ENCODE measurements at regions of chr19 and their contacts with region 1.

Region 1: GRCh38 chr19:33302175-33302973 is at the start of gene CEBPA:
- DNase-seq: peak; percentile 85 to 91 (median 88)
- H3K4me3 ChIP-seq: peak within 1 kb of the TSS; percentile 82 to 99 (median 90)
- H3K4me3 Mint-ChIP-seq: peak within 1 kb of the TSS; percentile 89 to 95
- H3K27ac ChIP-seq: peak within 1 kb of the TSS; percentile 73 to 84
- H3K27ac Mint-ChIP-seq: peak within 1 kb of the TSS; percentile 28 to 97 (median 81)
- H3K4me1 ChIP-seq: peaks cover 42 to 49% of the 10 kb centered on the region in 2 donors
- H3K4me1 Mint-ChIP-seq: peaks cover 63% of the 10 kb centered on the region
- H3K27me3 ChIP-seq: no peaks in the 10 kb centered on the region
- H3K27me3 Mint-ChIP-seq: peaks cover 0 to 2% (median 1%) of the 10 kb centered on the region in 3 donors
- CTCF ChIP-seq: peak; percentile 62
- polyA plus RNA-seq, gene CEBPA: 17.9 to 76.3 (median 47.5) TPM

Region 2: DNA sequence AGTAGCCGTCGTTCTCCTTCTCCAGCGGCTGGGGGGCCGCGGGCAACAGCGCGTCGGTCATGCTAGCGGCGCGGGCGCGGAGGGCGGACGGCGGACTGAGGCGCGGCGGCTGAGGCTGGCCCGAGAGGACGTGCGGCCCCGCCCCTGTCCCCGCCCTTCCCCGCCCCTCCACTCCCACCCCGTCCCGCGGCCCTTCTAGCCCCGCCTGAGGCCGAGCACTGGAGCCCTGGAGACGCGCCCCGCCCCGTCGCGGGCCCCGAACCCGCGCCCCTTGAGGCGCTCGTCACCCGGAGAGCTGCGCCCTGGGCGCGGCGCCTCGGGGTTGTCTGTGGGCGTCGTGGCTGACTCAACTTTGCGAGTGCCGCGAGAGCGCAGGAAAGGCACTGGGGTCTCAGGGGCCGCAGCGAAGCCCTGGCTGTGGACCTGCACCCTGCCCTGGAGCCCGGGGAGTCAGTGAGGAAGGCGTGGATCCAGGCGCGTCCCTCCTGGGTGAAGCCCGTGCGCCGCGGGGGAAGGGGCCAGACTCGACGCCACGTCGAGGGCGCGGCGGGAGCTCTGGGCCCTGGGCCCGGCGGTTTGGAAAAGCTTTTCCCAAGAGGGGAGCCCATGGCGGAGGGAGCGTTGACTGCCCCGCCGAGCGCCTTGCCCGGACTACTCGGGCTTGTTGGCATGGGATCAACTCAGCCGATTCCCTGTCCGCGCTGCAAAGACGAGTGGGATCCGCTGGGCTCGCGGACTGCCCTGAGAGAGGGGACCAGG is 237.4 kb before region 1 on chr19 and contains the start of gene RHPN2:
- intact Hi-C with region 1: no loop called
- DNase-seq: peak in 1 of 3 donors; percentile 3
- H3K4me3 ChIP-seq: no peak within 1 kb of the TSS
- H3K4me3 Mint-ChIP-seq: peak within 1 kb of the TSS; percentile 62 to 83
- H3K27ac ChIP-seq: no peak within 1 kb of the TSS
- H3K27ac Mint-ChIP-seq: no peak within 1 kb of the TSS
- H3K4me1 ChIP-seq: peaks cover 0 to 3% of the 10 kb centered on the region in 2 donors
- H3K4me1 Mint-ChIP-seq: peaks cover 4% of the 10 kb centered on the region
- H3K27me3 ChIP-seq: peaks cover 14 to 34% of the 10 kb centered on the region in 2 donors
- H3K27me3 Mint-ChIP-seq: peaks cover 33 to 72% (median 61%) of the 10 kb centered on the region in 3 donors
- CTCF ChIP-seq: no peak
- polyA plus RNA-seq, gene RHPN2: 0.16 to 0.93 (median 0.51) TPM

Region 3: DNA sequence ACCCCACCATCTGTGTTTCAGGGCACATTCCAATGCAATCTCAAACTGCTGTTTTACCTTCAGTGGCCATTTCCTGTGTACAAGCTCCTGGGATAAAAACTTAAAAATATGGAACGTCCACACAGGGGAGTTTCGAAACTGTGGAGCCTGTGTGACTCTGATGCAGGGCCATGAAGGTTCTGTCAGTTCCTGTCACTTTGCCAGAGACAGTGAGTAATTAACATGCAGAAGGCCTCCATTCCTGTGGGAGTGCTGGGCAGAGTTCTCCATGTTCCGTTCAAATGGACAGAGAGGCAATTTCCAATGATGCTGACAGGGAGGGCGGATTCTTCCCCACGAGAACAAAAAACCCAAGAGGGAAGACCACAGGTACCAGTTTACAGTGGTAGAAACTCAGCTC is 146.0 kb before region 1 on chr19:
- intact Hi-C with region 1: no loop called
- DNase-seq: peak in 1 of 3 donors; percentile 16
- H3K4me3 ChIP-seq: no peak overlapping the region
- H3K4me3 Mint-ChIP-seq: no peak overlapping the region
- H3K27ac ChIP-seq: no peak overlapping the region
- H3K27ac Mint-ChIP-seq: peak overlapping the region in 1 of 7 donors; percentile 53
- H3K4me1 ChIP-seq: peaks cover 12 to 59% of the 10 kb centered on the region in 2 donors
- H3K4me1 Mint-ChIP-seq: peaks cover 22% of the 10 kb centered on the region
- H3K27me3 ChIP-seq: no peaks in the 10 kb centered on the region
- H3K27me3 Mint-ChIP-seq: peaks cover 0 to 2% (median under 1%) of the 10 kb centered on the region in 3 donors
- CTCF ChIP-seq: no peak

Region 4: DNA sequence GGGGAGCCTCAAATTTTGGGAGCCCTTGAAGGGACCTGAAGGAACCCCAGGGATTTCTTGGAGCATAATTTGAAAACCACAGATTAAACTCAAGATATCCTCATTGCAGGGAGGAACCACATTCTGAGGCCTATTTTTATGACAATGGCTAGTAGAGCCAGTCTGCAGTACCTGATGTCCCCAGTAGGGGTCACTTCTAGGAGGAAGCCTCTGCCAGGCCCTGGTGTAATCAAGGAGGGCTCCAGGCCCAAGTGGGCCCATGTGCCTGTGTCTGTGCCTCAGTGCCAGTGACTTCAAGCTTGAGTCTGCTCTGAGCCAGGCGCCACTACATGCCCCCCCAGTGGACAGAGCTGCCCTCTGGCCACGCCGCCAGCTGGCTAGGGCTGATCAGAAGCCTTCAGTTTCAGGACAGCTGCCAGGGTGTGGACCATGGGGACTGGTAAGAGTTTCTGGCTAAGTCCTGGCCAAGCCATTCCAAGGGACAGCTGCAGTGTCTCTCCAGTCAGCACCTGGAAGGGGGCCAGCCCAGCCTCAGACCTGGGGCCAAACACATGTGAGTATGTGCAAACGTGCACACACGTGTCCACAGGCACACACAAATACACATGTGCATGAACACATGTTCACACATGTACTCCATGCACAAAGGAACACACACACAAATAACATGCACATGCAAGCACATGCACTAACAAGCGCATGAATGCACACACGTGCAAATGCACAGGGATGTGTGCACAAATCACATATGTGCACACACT is 56.2 kb before region 1 on chr19:
- intact Hi-C with region 1: loop called (anchors 2 to 5 kb)
- DNase-seq: peak in 2 of 3 donors; percentile 45 to 52
- H3K4me3 ChIP-seq: no peak overlapping the region
- H3K4me3 Mint-ChIP-seq: no peak overlapping the region
- H3K27ac ChIP-seq: no peak overlapping the region
- H3K27ac Mint-ChIP-seq: no peak overlapping the region
- H3K4me1 ChIP-seq: peaks cover 34 to 45% of the 10 kb centered on the region in 2 donors
- H3K4me1 Mint-ChIP-seq: peaks cover 29% of the 10 kb centered on the region
- H3K27me3 ChIP-seq: no peaks in the 10 kb centered on the region
- H3K27me3 Mint-ChIP-seq: peaks cover 1 to 8% (median 2%) of the 10 kb centered on the region in 3 donors
- CTCF ChIP-seq: peak; percentile 63

Region 5: DNA sequence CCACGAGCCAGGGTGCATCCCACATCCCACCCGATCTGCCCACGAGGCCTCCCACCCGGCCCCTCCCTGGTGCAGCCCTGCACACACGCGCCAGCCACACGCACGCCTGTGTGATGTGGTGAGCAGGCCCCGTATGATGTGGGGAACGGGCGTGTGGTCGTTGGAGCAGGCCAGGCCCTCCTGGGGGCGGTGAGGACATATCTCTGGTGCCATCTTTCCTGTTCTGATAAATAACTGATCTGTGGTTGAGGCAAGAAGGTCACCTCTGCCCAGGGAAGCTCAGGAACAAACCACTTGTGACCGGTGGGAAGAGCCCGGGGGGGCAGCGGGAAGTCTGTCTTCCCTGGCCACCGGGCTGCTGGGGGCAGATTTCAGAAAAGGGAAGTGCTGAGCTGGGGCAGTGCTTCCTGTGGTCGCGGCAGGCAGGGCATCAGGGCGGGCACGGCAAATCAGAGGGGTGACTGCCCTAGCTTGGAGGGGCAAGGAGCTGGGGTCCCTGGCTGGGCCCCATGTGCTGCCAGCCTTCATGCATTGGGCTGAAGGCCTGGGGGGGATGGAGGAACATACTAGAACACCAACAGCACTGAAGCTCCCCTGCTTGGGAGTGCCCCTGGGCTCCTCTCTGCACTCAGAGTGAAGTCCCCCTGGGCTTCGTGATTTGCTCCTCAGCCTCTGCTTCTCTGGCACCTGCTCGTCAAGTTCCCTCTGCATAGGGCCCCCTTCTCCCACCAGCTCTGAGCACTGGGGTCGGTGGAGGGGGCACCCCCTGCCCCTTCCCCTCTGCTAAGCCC is 41.6 kb before region 1 on chr19:
- intact Hi-C with region 1: loop called (anchors 5 kb)
- DNase-seq: peak; percentile 58 to 80 (median 78)
- H3K4me3 ChIP-seq: peak overlapping the region in 2 of 3 experiments; percentile 15 to 67
- H3K4me3 Mint-ChIP-seq: peak overlapping the region; percentile 65 to 88
- H3K27ac ChIP-seq: peak overlapping the region; percentile 75 to 89
- H3K27ac Mint-ChIP-seq: peak overlapping the region; percentile 87 to 96 (median 94)
- H3K4me1 ChIP-seq: peaks cover 55 to 62% of the 10 kb centered on the region in 2 donors
- H3K4me1 Mint-ChIP-seq: peaks cover 63% of the 10 kb centered on the region
- H3K27me3 ChIP-seq: no peaks in the 10 kb centered on the region
- H3K27me3 Mint-ChIP-seq: peaks cover 0 to 4% (median 0%) of the 10 kb centered on the region in 3 donors
- CTCF ChIP-seq: no peak

Region 6: DNA sequence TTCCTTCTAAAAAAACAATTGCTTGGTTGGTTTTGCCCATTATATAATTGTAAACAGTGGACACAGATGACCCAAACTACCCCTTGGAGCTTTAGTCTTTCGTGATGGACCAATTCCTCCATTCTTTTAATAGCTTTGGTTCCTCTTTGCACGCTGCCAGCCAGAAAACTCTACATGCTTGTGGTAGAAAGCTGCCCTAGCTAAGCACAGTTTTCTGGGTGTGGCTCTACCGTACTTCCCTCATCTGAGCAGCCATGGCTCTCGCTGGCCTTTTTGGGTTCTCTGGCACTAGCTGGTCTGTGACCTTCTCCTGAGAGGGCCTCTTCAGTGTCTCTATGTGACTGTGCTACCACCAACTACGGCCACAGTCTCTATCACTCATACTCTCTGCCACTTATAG is 29.9 kb after region 1 on chr19:
- intact Hi-C with region 1: loop called in 1 of 2 experiments (anchors 2 kb)
- DNase-seq: peak; percentile 77 to 87 (median 82)
- H3K4me3 ChIP-seq: peak overlapping the region in 1 of 3 experiments; percentile 51
- H3K4me3 Mint-ChIP-seq: peak overlapping the region in 1 of 2 donors; percentile 74
- H3K27ac ChIP-seq: peak overlapping the region; percentile 73 to 82
- H3K27ac Mint-ChIP-seq: peak overlapping the region; percentile 80 to 94 (median 93)
- H3K4me1 ChIP-seq: peaks cover 63 to 64% of the 10 kb centered on the region in 2 donors
- H3K4me1 Mint-ChIP-seq: peaks cover 56% of the 10 kb centered on the region
- H3K27me3 ChIP-seq: no peaks in the 10 kb centered on the region
- H3K27me3 Mint-ChIP-seq: peaks cover 0 to 4% (median 0%) of the 10 kb centered on the region in 3 donors
- CTCF ChIP-seq: no peak

Region 7: DNA sequence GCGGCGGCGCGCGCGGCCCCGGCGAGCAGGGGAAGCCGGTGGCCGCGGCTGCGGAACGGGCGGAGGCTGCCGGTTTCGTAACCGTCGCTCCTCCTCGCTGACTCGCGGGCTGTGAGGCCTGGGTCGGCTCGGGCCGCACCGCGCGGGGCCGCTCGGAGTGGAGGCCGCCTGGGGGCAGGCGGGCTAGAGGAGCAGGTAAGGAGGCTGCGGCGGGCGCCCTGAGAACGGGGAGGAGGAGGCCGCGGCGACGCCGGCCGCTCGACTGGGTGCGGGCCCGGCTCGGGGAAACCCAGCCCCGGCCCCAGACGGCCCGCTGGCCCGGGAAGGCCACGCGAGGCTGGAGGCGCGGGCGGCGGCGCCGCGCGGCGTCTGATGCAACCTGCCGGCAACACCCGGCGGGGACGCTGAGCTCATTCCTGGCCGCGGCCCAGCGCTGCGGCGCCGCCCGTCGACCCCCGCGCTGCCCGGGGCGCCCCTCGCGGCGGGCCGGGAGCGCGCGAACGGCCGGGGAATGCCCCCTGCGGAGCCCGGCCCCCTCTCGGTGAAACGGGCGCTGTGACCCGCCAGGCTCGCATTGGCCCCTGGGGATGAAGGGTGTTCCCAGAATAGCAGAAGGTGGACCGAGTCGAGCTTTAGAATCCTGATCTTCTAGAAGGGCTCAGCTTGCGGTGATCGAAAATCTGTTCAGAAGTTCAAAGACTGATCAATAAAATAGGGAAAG is 71.5 kb after region 1 on chr19 and contains the start of gene CEBPG:
- intact Hi-C with region 1: loop called (anchors 2 to 5 kb)
- DNase-seq: peak in 2 of 3 donors; percentile 46 to 49
- H3K4me3 ChIP-seq: peak within 1 kb of the TSS; percentile 73 to 96 (median 80)
- H3K4me3 Mint-ChIP-seq: peak within 1 kb of the TSS; percentile 85 to 96
- H3K27ac ChIP-seq: peak within 1 kb of the TSS; percentile 90 to 94
- H3K27ac Mint-ChIP-seq: peak within 1 kb of the TSS; percentile 89 to 98 (median 94)
- H3K4me1 ChIP-seq: peaks cover 51 to 59% of the 10 kb centered on the region in 2 donors
- H3K4me1 Mint-ChIP-seq: peaks cover 63% of the 10 kb centered on the region
- H3K27me3 ChIP-seq: no peaks in the 10 kb centered on the region
- H3K27me3 Mint-ChIP-seq: no peaks in the 10 kb centered on the region
- CTCF ChIP-seq: no peak
- polyA plus RNA-seq, gene CEBPG: 16.8 to 18.3 (median 17.8) TPM

Region 8: GRCh38 chr19:33406521-33407139 is 104.3 kb after region 1 on chr19:
- intact Hi-C with region 1: loop called (anchors 10 kb)
- DNase-seq: peak; percentile 63 to 74 (median 69)
- H3K4me3 ChIP-seq: no peak overlapping the region
- H3K4me3 Mint-ChIP-seq: no peak overlapping the region
- H3K27ac ChIP-seq: no peak overlapping the region
- H3K27ac Mint-ChIP-seq: no peak overlapping the region
- H3K4me1 ChIP-seq: peaks cover 46 to 62% of the 10 kb centered on the region in 2 donors
- H3K4me1 Mint-ChIP-seq: peaks cover 46% of the 10 kb centered on the region
- H3K27me3 ChIP-seq: no peaks in the 10 kb centered on the region
- H3K27me3 Mint-ChIP-seq: peaks cover 0 to 6% (median 0%) of the 10 kb centered on the region in 3 donors
- CTCF ChIP-seq: peak; percentile 97

Region 9: DNA sequence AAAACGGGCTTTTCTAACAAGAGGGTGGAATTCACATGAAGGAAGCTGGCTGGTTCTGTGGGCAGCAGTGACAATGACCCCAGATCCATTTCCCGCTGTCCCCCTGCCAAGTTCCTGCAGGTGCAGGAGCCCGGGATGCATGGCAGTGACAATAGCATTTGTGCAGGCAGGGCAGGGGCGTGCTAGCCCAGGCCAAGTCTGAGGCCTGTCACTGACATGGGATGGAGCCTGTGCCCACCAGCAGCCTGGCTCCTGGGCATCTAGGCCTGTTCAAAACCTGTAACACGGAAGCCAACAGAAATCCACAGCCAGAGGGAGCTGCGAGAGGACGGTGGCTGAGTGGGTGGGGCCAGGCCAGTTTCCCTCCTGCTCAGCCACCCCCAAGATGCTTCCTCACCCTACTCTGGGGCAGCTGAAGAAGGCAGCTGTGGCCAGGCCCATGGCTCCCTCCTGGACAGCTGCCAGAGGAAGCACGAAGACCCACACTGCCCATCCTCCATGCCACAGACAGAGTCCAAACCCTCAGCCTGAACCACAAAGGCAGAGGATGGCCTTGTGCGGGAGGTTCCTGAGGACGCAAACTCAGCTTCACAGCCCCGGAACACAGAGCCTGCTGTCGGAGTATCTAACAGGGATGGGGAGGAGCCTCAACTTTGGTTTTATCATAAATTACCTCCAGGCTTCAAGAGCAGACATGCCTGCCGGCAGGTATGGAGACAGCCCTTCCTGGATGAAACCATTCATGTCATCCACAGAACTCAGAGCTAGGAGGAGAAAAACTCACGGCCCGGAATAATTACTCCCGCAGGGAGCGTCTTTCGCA is 145.2 kb after region 1 on chr19:
- intact Hi-C with region 1: no loop called
- DNase-seq: no peak
- H3K4me3 ChIP-seq: no peak overlapping the region
- H3K4me3 Mint-ChIP-seq: no peak overlapping the region
- H3K27ac ChIP-seq: no peak overlapping the region
- H3K27ac Mint-ChIP-seq: no peak overlapping the region
- H3K4me1 ChIP-seq: no peaks in the 10 kb centered on the region
- H3K4me1 Mint-ChIP-seq: no peaks in the 10 kb centered on the region
- H3K27me3 ChIP-seq: no peaks in the 10 kb centered on the region
- H3K27me3 Mint-ChIP-seq: peaks cover 0 to 4% (median 2%) of the 10 kb centered on the region in 3 donors
- CTCF ChIP-seq: no peak